Esophagus squamous epithelium (tissue), 5 donors: ENCODE measurements at regions of chr2 and their contacts with region 1.

Region 1: GRCh38 chr2:47782671-47783485 is at the start of gene MSH6:
- DNase-seq: peak; percentile 44
- H3K4me3 ChIP-seq: peak within 1 kb of the TSS; percentile 71 to 93 (median 84)
- H3K27ac ChIP-seq: peak within 1 kb of the TSS; percentile 88 to 95 (median 94)
- H3K4me1 ChIP-seq: peaks cover 6 to 37% (median 16%) of the 10 kb centered on the region in 3 donors
- H3K27me3 ChIP-seq: no peaks in the 10 kb centered on the region
- CTCF ChIP-seq: peak in 1 of 6 experiments; percentile 16
- POLR2A ChIP-seq: peak in 2 of 4 donors; percentile 66 to 89
- total RNA-seq, gene MSH6: 22.7 to 29.5 (median 25.4) TPM

Region 2: DNA sequence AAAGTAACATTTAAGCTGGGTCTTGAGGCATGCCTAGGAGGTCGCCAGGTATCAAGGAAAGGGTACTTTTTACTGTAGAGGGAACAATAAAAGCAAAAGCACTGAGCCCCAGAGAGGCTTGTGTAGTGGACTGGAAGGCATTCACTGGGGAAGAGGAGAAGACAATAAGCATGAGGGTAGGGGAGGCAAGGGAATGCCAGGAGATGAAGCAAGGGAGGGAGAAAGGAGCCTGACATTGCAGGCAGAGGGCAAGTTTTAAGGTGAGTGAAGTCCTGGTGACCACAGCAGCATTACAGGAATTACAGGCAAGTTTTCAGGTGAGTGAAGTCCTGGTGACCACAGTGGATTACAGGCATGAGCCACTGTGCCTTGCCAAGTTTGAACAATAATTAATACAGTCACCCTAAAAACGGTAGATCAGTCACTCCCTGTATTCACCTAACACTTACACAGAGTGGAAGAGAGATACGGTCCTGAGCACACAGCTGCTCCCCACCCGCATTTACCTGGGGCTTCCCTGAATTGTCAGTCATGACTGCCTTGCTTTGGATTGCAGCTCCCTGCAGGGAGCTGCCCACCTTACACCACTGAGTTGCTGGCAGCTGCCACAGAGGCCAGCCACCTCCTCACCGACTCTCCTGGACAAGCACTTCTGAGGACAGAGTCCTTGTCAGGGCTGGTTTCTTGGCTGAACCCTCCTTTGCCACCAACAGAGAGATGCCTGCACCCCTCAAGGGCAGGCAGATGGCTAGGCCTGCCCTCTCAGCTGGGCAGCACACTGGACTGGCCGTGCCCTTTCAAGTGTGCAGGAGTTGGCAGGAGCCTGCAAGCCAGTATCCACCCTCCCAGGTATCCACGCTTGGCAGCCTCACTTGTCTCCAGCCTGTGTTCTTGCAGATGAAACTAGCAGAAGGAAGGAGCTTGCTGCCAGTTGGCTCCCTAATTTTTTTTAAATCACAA is 153.1 kb before region 1 on chr2:
- intact Hi-C with region 1: no loop called
- DNase-seq: no peak
- H3K4me3 ChIP-seq: no peak overlapping the region
- H3K27ac ChIP-seq: no peak overlapping the region
- H3K4me1 ChIP-seq: peaks cover 0 to 7% (median 0%) of the 10 kb centered on the region in 3 donors
- H3K27me3 ChIP-seq: no peaks in the 10 kb centered on the region
- CTCF ChIP-seq: no peak
- POLR2A ChIP-seq: no peak

Region 3: DNA sequence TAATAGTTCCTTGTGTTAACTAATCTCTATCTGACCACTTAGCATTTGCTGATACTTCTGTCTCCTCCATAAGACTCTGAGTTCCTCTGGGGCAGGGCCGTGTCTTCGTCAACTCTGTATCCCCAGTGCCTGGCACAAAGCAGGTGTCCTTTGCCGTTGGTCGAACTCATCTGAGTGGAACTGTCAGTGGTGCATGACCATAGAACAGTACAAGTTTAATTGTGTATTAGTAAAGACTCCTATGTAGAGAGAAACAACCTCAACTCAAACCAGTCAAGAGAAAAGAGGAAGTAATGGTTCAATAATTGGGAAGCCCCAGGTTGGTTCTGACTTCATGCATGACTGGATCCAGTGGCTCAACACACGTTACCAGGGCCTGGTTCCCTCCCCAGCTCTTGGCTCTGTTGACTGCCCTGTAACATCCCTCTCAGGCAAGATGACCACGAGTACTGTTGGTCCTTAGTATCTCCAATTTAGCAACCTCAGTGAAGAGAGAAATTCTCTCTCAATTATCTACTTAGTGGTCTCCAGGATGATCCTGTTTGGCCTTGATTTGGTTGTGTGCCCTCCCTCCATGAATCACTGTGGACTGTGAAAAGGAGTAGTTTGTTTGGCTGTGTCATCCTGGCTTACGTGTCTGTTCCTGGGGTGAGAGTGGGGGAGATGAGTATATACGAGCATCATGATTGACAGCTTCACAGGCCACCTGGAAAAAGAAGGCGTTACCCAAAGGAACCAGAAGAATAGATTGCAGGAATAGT is 58.5 kb before region 1 on chr2:
- intact Hi-C with region 1: no loop called
- DNase-seq: no peak
- H3K4me3 ChIP-seq: no peak overlapping the region
- H3K27ac ChIP-seq: no peak overlapping the region
- H3K4me1 ChIP-seq: no peaks in the 10 kb centered on the region
- H3K27me3 ChIP-seq: no peaks in the 10 kb centered on the region
- CTCF ChIP-seq: no peak
- POLR2A ChIP-seq: no peak

Region 4: GRCh38 chr2:47906157-47907038 is 123.5 kb after region 1 on chr2 and contains the start of gene FBXO11:
- intact Hi-C with region 1: loop called (anchors 10 kb)
- DNase-seq: peak; percentile 91
- H3K4me3 ChIP-seq: peak within 1 kb of the TSS; percentile 96 to 99 (median 98)
- H3K27ac ChIP-seq: peak within 1 kb of the TSS; percentile 99 to 100 (median 100)
- H3K4me1 ChIP-seq: peaks cover 0 to 38% (median 5%) of the 10 kb centered on the region in 3 donors
- H3K27me3 ChIP-seq: no peaks in the 10 kb centered on the region
- CTCF ChIP-seq: peak in 4 of 6 experiments; percentile 26 to 63 (median 51)
- POLR2A ChIP-seq: peak in 3 of 4 donors; percentile 33 to 85 (median 82)
- total RNA-seq, gene FBXO11: 21.0 to 50.2 (median 34.7) TPM